Caco-2 (cell line): ENCODE measurements at regions of chr13 and their contacts with region 1.

Region 1: GRCh38 chr13:21164631-21165030 is 11.7 kb downstream of the SKA3 start:
- DNase-seq: no peak
- H3K4me3 ChIP-seq: no peak overlapping the region
- H3K4me3 Mint-ChIP-seq: no peak overlapping the region
- H3K27ac Mint-ChIP-seq: no peak overlapping the region
- H3K4me1 ChIP-seq: no peaks in the 10 kb centered on the region
- H3K4me1 Mint-ChIP-seq: no peaks in the 10 kb centered on the region
- H3K27me3 ChIP-seq: no peaks in the 10 kb centered on the region; the same call in 1 of the 2 replicates
- H3K27me3 Mint-ChIP-seq: no peaks in the 10 kb centered on the region
- CTCF ChIP-seq: no peak

Region 2: GRCh38 chr13:21034603-21035191 is 129.9 kb before region 1 on chr13:
- CTCF ChIA-PET with region 1: no interaction called
- POLR2A ChIA-PET with region 1: no interaction called
- intact Hi-C with region 1: no loop called
- DNase-seq: no peak
- H3K4me3 ChIP-seq: no peak overlapping the region
- H3K4me3 Mint-ChIP-seq: no peak overlapping the region
- H3K27ac Mint-ChIP-seq: no peak overlapping the region
- H3K4me1 ChIP-seq: no peaks in the 10 kb centered on the region
- H3K4me1 Mint-ChIP-seq: peaks cover 34% of the 10 kb centered on the region
- H3K27me3 ChIP-seq: no peaks in the 10 kb centered on the region
- H3K27me3 Mint-ChIP-seq: no peaks in the 10 kb centered on the region
- CTCF ChIP-seq: no peak

Region 3: DNA sequence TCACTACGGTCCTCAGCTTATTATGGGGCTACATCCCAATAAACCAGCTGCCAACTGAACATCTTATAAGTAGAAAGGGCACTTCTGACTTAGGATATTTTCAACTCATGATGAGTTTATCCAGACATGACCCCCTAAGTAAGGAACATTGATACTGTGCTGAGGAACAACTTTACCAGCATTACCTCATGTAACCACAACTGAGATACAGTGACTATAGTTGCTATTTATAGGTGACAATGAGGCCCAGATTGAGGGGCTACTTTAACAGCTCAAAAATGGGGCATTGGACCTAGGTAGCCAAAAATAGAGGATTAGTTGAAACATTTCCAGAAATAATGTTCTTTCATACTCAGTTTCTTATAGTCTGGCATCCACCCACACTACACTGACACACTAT is 15.1 kb before region 1 on chr13:
- CTCF ChIA-PET with region 1: no interaction called
- POLR2A ChIA-PET with region 1: no interaction called
- intact Hi-C with region 1: loop called (anchors 1 kb)
- DNase-seq: no peak
- H3K4me3 ChIP-seq: no peak overlapping the region
- H3K4me3 Mint-ChIP-seq: no peak overlapping the region
- H3K27ac Mint-ChIP-seq: no peak overlapping the region
- H3K4me1 ChIP-seq: no peaks in the 10 kb centered on the region
- H3K4me1 Mint-ChIP-seq: peaks cover 6% of the 10 kb centered on the region
- H3K27me3 ChIP-seq: no peaks in the 10 kb centered on the region
- H3K27me3 Mint-ChIP-seq: no peaks in the 10 kb centered on the region
- CTCF ChIP-seq: no peak

Region 4: DNA sequence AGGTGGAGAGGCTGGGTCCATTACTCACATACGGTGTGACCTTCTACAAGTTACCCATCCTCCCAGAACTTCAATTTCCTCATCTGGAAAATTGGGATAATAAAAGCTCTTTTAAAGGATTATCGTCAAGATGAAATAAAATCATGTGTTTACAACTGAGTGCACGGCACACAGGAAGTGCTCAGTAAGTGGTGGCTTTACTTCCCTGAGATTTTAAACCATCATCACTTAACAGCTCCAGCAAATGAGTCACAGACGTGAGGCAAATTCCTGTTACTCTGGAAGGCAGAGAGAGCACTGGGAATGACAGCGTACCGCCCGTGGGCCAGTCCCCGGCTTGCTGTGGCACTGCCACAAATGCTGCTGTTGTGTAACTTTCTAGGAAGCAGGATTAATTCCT is 76.0 kb after region 1 on chr13:
- CTCF ChIA-PET with region 1: no interaction called
- POLR2A ChIA-PET with region 1: no interaction called
- intact Hi-C with region 1: no loop called
- DNase-seq: no peak
- H3K4me3 ChIP-seq: no peak overlapping the region
- H3K4me3 Mint-ChIP-seq: no peak overlapping the region
- H3K27ac Mint-ChIP-seq: no peak overlapping the region
- H3K4me1 ChIP-seq: no peaks in the 10 kb centered on the region
- H3K4me1 Mint-ChIP-seq: no peaks in the 10 kb centered on the region
- H3K27me3 ChIP-seq: no peaks in the 10 kb centered on the region
- H3K27me3 Mint-ChIP-seq: peaks cover 3% of the 10 kb centered on the region
- CTCF ChIP-seq: no peak

Region 5: GRCh38 chr13:22757530-22758120 is 1593.0 kb after region 1 on chr13:
- CTCF ChIA-PET with region 1: no interaction called
- POLR2A ChIA-PET with region 1: no interaction called
- intact Hi-C with region 1: no loop called
- DNase-seq: no peak
- H3K4me3 ChIP-seq: no peak overlapping the region
- H3K4me3 Mint-ChIP-seq: no peak overlapping the region
- H3K27ac Mint-ChIP-seq: no peak overlapping the region
- H3K4me1 ChIP-seq: no peaks in the 10 kb centered on the region
- H3K4me1 Mint-ChIP-seq: no peaks in the 10 kb centered on the region
- H3K27me3 ChIP-seq: no peaks in the 10 kb centered on the region
- H3K27me3 Mint-ChIP-seq: no peaks in the 10 kb centered on the region
- CTCF ChIP-seq: peak; percentile 30 to 57